ENCODE measurements at regions of chr1 and their contacts with region 1.

Region 1: GRCh38 chr1:28882009-28882628 is 32.2 kb upstream of the EPB41 start:
- DNase-seq: peak; percentile 89 to 90
- H3K4me3 ChIP-seq: no peak overlapping the region
- H3K27ac ChIP-seq: peak overlapping the region in 1 of 2 donors; percentile 24
- H3K4me1 ChIP-seq: no peaks in the 10 kb centered on the region
- H3K27me3 ChIP-seq: no peaks in the 10 kb centered on the region
- CTCF ChIP-seq: peak; percentile 93 to 97 (median 97)
- POLR2A ChIP-seq: peak in 1 of 2 donors; percentile 18

Region 2: DNA sequence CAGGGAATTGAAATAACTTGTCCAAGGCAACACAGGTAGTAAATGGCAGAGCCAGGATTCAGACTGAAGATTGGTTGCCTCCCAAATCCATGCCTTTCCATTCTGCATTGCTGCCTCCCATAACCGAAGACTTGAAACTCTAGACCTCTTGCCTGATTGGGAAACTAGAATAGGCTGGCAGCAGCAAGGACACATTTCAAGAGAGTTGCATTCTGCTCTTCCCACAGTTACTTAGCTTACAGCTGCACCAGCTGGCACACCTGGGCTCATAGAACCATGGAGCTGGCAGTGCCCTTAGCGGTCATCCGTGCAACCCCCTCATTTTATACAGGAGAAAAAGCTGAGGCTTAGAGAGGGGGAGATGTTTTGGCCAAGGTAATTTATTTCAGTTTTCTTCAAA is 321.2 kb before region 1 on chr1:
- intact Hi-C with region 1: no loop called
- DNase-seq: no peak
- H3K4me3 ChIP-seq: no peak overlapping the region
- H3K27ac ChIP-seq: no peak overlapping the region
- H3K4me1 ChIP-seq: no peaks in the 10 kb centered on the region
- H3K27me3 ChIP-seq: no peaks in the 10 kb centered on the region
- CTCF ChIP-seq: no peak
- POLR2A ChIP-seq: no peak

Region 3: GRCh38 chr1:28845786-28846543 is 36.2 kb before region 1 on chr1:
- intact Hi-C with region 1: no loop called
- DNase-seq: no peak
- H3K4me3 ChIP-seq: no peak overlapping the region
- H3K27ac ChIP-seq: no peak overlapping the region
- H3K4me1 ChIP-seq: no peaks in the 10 kb centered on the region
- H3K27me3 ChIP-seq: no peaks in the 10 kb centered on the region
- CTCF ChIP-seq: no peak
- POLR2A ChIP-seq: no peak

Region 4: DNA sequence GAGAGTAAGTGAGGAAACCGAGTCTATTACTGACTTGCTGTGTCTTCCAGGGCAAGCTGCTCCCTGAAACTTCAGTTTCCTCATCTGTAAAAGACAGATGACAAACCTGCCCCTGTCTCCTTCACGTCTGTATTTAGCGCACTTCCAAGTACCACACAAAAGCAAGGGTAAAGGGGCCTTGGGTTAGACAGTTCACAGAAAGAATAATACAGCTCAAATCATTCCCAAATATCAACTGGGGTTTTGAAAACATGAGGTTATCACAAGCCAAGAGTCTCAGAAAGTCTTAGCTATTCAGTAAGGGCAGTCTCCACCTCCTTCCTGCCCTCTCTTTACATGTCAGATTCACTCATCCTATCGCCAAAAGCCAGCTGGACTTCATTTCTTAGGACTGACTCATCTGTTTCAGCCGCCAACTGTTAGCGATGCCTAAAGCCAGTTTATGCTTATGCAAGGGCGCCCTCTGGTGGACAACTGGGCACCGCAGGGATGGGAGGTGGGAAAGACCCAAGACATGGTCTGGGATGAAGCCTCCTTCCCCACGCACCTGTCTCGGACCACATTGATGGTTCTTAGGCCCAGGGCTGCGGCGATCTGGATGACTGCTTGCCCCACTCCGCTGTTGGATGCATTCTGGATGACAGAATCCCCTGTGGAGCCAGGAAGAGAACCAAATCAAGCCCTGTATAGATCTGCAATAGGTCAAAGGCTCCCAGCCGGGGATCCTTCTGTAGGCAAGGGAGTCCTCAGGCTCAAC is 320.6 kb after region 1 on chr1:
- intact Hi-C with region 1: loop called (anchors 5 kb)
- DNase-seq: peak; percentile 95 to 98
- H3K4me3 ChIP-seq: no peak overlapping the region
- H3K27ac ChIP-seq: peak overlapping the region; percentile 79 to 94
- H3K4me1 ChIP-seq: peaks cover 0 to 5% of the 10 kb centered on the region in 2 donors
- H3K27me3 ChIP-seq: no peaks in the 10 kb centered on the region
- CTCF ChIP-seq: peak; percentile 89 to 97 (median 97)
- POLR2A ChIP-seq: no peak